IMR-90 (cell line): ENCODE measurements at regions of chr15 and their contacts with region 1.

Region 1: DNA sequence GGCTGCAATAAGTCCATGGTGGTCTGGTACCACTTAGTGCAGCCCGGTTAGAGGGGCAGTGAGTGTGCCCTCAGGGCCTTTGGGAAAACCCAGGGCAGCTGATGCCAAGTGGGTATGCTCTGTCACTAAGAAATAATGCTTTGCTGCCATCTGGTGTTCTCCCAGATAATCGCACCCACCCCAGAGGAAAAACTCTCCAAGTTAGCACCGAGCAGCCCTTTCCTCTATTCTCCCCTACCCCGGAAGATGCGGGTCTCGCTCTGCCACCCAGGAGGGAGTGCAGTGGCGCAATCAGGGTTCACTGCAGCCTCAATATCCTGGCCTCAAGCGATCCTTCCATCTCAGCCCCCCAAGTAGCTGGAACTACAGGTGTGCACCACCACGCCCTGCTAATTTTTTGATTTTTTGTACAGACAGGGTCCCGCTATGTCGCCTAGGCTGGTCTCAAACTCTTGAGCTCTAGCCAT is 21.3 kb upstream of the DAPK2 start:
- DNase-seq: peak; percentile 44
- ATAC-seq: peak; percentile 78
- H3K4me3 ChIP-seq: no peak overlapping the region
- H3K27ac ChIP-seq: no peak overlapping the region
- H3K4me1 ChIP-seq: peaks cover 10% of the 10 kb centered on the region
- H3K27me3 ChIP-seq: no peaks in the 10 kb centered on the region
- CTCF ChIP-seq: peak; percentile 83
- POLR2A ChIP-seq: no peak
- RAD21 ChIP-seq: peak; percentile 89

Region 2: DNA sequence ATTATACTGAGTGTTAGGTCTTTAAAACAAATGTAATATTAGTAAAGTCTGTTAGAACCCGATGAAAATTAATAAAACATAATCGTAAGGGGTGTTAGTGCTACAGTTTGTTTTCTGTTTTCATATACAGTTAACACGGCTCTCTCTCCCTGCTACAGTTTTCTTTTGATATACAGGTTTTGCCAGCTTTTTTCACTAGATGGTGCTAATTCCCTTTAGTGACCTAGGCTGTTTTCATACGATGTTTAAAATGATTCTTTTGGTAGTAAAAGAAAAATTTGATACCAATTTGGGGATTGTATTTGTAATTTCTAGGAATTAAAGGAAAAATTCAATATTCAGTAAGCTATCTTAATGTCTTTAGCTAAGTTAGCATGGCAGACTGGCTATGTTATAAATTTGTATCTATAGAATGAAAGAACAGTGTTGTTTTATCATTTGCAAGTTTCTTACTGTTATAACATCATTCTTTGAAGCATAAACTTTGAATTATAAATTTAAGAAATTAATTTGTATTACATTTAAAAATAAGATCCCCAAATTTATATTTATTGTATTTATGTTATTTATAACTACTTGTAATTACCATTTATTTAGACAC is 778.7 kb before region 1 on chr15:
- CTCF ChIA-PET with region 1: no interaction called
- POLR2A ChIA-PET with region 1: no interaction called
- dilution Hi-C with region 1: no loop called
- in situ Hi-C with region 1: loop called (anchors 25 kb)
- intact Hi-C with region 1: loop called (anchors 10 kb)
- DNase-seq: peak; percentile 69
- ATAC-seq: peak; percentile 68
- H3K4me3 ChIP-seq: no peak overlapping the region
- H3K27ac ChIP-seq: no peak overlapping the region
- H3K4me1 ChIP-seq: peaks cover 2% of the 10 kb centered on the region; the same call in 1 of the 2 replicates
- H3K27me3 ChIP-seq: no peaks in the 10 kb centered on the region
- CTCF ChIP-seq: peak; percentile 86
- POLR2A ChIP-seq: no peak
- RAD21 ChIP-seq: peak; percentile 88

Region 3: DNA sequence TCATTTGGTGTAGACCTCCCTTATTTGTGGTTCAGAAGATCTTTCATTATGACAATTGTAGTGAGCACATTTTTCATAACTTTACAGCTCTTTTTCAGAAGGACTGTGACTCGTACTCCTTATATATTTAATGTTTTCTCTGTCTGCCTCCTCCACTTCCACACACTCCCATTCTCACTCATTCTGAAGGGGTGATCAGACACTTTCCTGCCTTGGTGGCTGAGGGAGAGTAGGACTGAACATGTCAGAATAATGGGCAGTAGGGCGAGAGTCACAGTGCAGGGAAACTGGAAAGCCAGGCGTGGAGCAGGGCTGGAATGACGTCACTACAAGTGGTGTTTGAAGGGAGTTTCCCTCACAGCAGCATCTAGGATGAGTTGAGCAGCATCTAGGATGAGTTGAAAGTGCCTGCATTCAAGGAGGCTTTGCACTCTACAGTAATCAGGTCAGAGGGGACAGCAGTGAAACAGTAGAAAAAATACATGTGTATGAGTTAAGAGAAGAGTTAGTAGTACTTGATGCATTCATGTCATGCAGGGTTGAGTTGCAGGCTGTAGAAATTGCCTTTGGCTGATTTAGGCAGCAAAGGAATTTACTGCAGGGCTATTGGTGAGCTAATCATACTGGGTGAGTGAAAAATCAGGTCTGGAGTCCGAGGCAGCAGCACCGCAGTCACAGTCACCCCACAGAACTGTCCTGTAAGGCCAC is 506.7 kb before region 1 on chr15:
- CTCF ChIA-PET with region 1: no interaction called
- POLR2A ChIA-PET with region 1: no interaction called
- dilution Hi-C with region 1: no loop called
- in situ Hi-C with region 1: no loop called
- intact Hi-C with region 1: no loop called
- DNase-seq: peak; percentile 27
- ATAC-seq: no peak; the same call in 1 of the 2 replicates
- H3K4me3 ChIP-seq: no peak overlapping the region
- H3K27ac ChIP-seq: no peak overlapping the region
- H3K4me1 ChIP-seq: peaks cover 2% of the 10 kb centered on the region; the same call in 1 of the 2 replicates
- H3K27me3 ChIP-seq: no peaks in the 10 kb centered on the region
- CTCF ChIP-seq: no peak
- POLR2A ChIP-seq: no peak
- RAD21 ChIP-seq: no peak

Region 4: GRCh38 chr15:63610200-63610841 is 457.3 kb before region 1 on chr15:
- CTCF ChIA-PET with region 1: interaction called, 6 read pairs
- POLR2A ChIA-PET with region 1: no interaction called
- dilution Hi-C with region 1: no loop called
- in situ Hi-C with region 1: no loop called
- intact Hi-C with region 1: loop called (anchors 1 kb)
- DNase-seq: peak; percentile 82
- ATAC-seq: peak; percentile 98
- H3K4me3 ChIP-seq: no peak overlapping the region
- H3K27ac ChIP-seq: peak overlapping the region; percentile 23; the same call in 1 of the 2 replicates
- H3K4me1 ChIP-seq: peaks cover 5% of the 10 kb centered on the region; the same call in 1 of the 2 replicates
- H3K27me3 ChIP-seq: no peaks in the 10 kb centered on the region
- CTCF ChIP-seq: peak; percentile 86
- POLR2A ChIP-seq: no peak
- RAD21 ChIP-seq: peak; percentile 83

Region 5: GRCh38 chr15:63752075-63752684 is 315.4 kb before region 1 on chr15:
- CTCF ChIA-PET with region 1: interaction called, 24 read pairs
- POLR2A ChIA-PET with region 1: no interaction called
- dilution Hi-C with region 1: no loop called
- in situ Hi-C with region 1: loop called (anchors 5 kb)
- intact Hi-C with region 1: loop called (anchors 1 kb)
- DNase-seq: peak; percentile 65
- ATAC-seq: peak; percentile 84
- H3K4me3 ChIP-seq: no peak overlapping the region
- H3K27ac ChIP-seq: no peak overlapping the region
- H3K4me1 ChIP-seq: no peaks in the 10 kb centered on the region; the same call in 1 of the 2 replicates
- H3K27me3 ChIP-seq: no peaks in the 10 kb centered on the region
- CTCF ChIP-seq: peak; percentile 77
- POLR2A ChIP-seq: no peak
- RAD21 ChIP-seq: peak; percentile 79

Region 6: DNA sequence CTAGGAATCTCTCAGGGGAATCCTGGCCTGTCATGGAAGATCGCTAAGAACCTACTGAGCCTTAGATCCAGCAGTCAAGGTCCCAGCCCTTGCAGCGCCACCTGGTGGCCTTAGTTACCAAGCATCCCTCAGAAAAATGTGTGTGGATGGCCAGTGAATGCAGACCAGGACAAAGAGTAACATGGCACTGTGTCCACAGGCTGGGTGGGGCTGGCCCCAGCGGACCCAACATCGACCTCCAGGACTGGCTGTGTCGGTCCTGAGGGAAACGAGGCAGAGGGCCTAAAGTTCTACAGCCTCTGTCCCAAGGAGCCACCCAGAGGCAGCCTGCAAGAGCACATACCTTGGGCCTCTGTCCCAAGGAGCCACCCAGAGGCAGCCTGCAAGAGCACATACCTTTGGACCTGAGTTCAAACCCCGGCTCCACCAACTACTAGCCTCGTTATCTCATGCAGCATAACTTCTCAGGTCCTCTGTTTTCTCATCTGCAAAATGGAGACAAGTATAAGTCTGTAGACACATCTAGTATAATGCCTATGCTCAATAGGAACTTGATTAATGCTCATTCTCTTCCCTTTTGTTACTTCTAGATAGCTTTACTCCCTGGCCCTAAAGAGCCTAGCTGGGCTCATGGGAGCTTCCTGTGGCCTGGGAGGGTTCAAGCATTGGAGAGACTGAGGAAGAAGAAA is 176.4 kb before region 1 on chr15:
- CTCF ChIA-PET with region 1: interaction called, 3 read pairs
- POLR2A ChIA-PET with region 1: no interaction called
- dilution Hi-C with region 1: no loop called
- in situ Hi-C with region 1: no loop called
- intact Hi-C with region 1: loop called (anchors 1 kb)
- DNase-seq: peak; percentile 67
- ATAC-seq: peak; percentile 98
- H3K4me3 ChIP-seq: no peak overlapping the region
- H3K27ac ChIP-seq: no peak overlapping the region
- H3K4me1 ChIP-seq: peaks cover 2% of the 10 kb centered on the region; the same call in 1 of the 2 replicates
- H3K27me3 ChIP-seq: peaks cover 14% of the 10 kb centered on the region
- CTCF ChIP-seq: peak; percentile 85
- POLR2A ChIP-seq: no peak
- RAD21 ChIP-seq: peak; percentile 81

Region 7: DNA sequence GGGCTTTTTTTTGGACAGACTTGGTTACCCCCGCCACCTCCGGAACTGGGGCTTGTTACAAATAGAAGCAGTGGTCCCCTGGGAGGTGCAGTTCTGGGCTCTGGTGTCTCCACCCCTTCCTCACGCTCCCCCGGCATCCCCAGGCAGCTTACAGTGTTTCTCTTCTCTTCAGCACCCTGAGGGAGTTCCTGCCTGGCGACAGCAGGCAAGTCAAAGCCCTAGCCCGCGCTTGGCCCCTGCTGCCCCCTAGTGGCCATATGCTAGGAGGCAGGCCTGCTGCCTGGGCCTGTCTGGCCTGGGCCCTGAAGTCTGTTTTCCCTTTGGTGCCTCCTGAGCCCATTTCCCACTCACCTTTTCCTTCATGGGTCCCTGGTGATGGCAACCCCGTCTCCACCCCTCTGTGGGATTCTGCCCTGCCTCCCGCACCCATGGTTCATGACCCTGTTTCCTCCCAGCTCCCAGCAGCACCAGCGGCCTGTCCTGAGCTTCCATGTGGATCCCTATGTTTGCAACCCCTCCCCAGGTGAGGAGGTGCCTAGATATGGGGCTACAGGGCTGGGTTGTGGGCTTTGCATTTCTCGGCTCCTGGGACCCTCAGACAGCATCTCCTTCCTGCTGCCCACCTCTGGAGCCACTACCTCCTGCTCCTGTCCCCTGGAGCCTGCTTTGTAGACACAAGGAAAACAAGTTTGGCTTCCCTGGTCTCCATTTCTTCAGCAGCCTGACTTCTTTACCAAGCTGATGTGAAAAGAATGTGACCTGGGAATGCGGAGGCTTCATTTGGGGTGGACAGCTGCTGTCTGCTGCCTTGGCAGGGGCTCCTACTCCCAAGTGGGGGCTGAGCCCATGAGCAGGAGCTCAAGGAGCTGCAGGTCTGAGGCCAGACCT is 86.1 kb after region 1 on chr15:
- CTCF ChIA-PET with region 1: no interaction called
- POLR2A ChIA-PET with region 1: no interaction called
- dilution Hi-C with region 1: no loop called
- in situ Hi-C with region 1: no loop called
- intact Hi-C with region 1: no loop called
- DNase-seq: peak; percentile 79
- ATAC-seq: peak; percentile 85
- H3K4me3 ChIP-seq: no peak overlapping the region
- H3K27ac ChIP-seq: no peak overlapping the region
- H3K4me1 ChIP-seq: peaks cover 2% of the 10 kb centered on the region; the same call in 1 of the 2 replicates
- H3K27me3 ChIP-seq: peaks cover 15% of the 10 kb centered on the region
- CTCF ChIP-seq: peak; percentile 96
- POLR2A ChIP-seq: peak; percentile 72; the same call in 1 of the 2 replicates
- RAD21 ChIP-seq: peak; percentile 76